Activated naive CD8-positive, alpha-beta T cell treated with anti-CD3 and anti-CD28 coated beads, Interleukin-2, amount 10 ng/mL, durations not matched to agents 7 days and 5 days (primary cell): ENCODE measurements at regions of chr5 and their contacts with region 1.

Region 1: DNA sequence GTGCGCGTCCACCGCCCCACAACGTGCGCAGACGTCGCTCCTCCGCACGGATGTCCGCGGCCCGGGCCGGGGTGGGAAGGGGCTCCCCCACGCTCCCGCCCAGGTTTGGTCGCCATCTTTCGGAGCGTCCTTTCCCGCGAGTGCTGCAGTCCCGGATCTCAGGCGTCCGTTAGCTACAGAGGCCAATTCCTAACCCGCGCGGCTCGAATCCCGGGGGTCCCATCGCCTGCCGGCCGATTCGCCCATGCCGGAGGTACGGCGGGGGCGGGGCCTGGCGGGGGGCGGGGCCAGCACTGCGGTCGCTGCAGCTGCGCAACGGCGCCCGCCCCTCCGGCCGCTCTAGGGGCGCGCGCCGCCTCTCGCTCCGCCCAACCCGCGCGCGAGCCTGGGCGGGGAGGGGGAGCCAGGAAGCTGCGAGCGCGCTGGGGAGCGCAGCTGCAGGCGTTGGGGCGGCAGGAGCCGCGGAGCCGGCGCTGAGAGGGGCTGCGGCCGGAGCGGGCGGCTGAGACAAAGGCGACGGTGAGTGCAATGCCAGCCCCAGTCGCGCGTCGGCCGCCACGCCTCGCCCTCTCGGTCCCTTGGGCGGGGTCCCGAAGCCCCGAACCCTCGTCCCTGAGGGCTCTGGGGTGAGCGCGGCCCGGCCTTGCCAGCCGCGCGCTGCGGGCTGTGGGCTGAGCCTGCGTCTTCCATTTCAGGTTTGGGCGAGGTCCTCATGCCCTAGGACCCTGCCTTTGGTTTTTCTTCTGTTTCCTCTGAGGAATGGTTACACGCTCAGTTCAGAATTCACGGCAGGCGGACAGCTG is at the start of gene CDC42SE2:
- DNase-seq: peak; percentile 96
- ATAC-seq: peak; percentile 86
- H3K4me3 Mint-ChIP-seq: peak within 1 kb of the TSS; percentile 90
- H3K27ac Mint-ChIP-seq: peak within 1 kb of the TSS; percentile 89
- H3K4me1 Mint-ChIP-seq: peaks cover 38% of the 10 kb centered on the region
- H3K27me3 Mint-ChIP-seq: no peaks in the 10 kb centered on the region
- total RNA-seq, gene CDC42SE2: 193 to 199 TPM

Region 2: DNA sequence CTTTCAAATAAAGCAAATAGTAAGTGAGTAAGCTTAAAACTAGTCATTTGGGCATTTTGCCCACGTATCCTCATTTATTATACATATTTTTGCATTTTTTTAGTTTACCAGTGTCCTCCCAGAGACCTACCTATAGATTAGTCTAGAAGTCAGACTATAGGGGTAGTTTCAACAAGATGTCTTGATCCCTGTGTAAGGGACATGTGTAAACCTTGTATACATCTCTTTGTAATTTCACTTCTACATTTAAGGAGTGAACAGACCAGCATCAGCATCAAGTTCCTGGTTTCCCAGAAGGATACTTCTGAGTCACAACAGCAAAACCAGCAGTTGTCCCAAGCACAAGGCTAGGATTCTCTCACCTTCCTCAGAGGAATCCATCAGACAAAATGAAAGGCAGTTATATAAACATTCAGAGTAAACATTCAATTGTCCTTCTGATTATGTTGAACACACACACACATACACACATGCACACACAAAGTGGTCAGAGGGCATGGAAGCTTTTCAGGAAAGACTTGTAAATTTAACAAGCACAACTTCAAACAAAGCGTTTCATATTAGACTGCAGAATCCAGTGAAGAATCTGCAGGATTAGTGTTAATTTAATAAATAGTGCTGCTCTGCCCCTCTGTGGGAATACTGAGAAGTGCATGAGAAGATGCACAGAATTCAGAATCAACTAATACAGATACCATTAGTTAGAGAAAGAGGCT is 154.2 kb before region 1 on chr5:
- POLR2A ChIA-PET with region 1: no interaction called
- DNase-seq: no peak
- ATAC-seq: peak; percentile 45
- H3K4me3 Mint-ChIP-seq: no peak overlapping the region
- H3K27ac Mint-ChIP-seq: no peak overlapping the region
- H3K4me1 Mint-ChIP-seq: peaks cover 10% of the 10 kb centered on the region
- H3K27me3 Mint-ChIP-seq: no peaks in the 10 kb centered on the region

Region 3: GRCh38 chr5:131165119-131165727 is 98.6 kb before region 1 on chr5 and contains the start of gene HINT1:
- POLR2A ChIA-PET with region 1: interaction called, 34 read pairs
- DNase-seq: peak; percentile 97
- ATAC-seq: peak; percentile 85
- H3K4me3 Mint-ChIP-seq: peak within 1 kb of the TSS; percentile 98
- H3K27ac Mint-ChIP-seq: peak within 1 kb of the TSS; percentile 97
- H3K4me1 Mint-ChIP-seq: peaks cover 42% of the 10 kb centered on the region
- H3K27me3 Mint-ChIP-seq: no peaks in the 10 kb centered on the region
- total RNA-seq, gene HINT1: 249 to 251 TPM

Region 4: GRCh38 chr5:131224387-131225201 is 39.3 kb before region 1 on chr5:
- POLR2A ChIA-PET with region 1: interaction called, 10 read pairs
- DNase-seq: peak; percentile 36
- ATAC-seq: peak; percentile 90
- H3K4me3 Mint-ChIP-seq: no peak overlapping the region
- H3K27ac Mint-ChIP-seq: no peak overlapping the region
- H3K4me1 Mint-ChIP-seq: peaks cover 6% of the 10 kb centered on the region
- H3K27me3 Mint-ChIP-seq: no peaks in the 10 kb centered on the region

Region 5: DNA sequence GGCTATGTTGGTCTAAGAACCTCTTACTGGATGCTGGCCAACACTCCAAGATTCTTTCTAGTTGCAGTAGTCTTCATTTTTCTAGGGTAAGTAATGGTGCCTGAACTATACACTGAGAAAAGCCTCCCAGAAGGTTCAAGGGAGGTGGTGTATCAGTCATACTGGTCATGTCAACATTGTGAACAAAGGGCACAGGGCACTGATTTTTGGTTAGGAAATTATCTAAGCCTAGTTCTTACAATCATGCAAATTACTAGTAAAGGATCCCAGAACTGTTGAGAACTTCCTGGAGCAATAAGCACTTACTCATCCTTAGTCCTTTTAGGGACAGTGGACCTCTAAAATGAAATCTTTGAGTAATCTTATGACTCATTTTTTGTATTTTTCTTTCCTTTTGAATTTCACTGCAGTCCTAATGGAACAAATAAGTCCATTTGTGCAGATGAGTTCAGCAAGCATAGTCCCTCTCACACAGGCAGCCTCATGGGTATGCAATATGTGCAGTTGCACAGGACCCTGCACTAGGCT is 21.1 kb before region 1 on chr5:
- POLR2A ChIA-PET with region 1: no interaction called
- DNase-seq: no peak
- ATAC-seq: no peak
- H3K4me3 Mint-ChIP-seq: no peak overlapping the region
- H3K27ac Mint-ChIP-seq: no peak overlapping the region
- H3K4me1 Mint-ChIP-seq: peaks cover 6% of the 10 kb centered on the region
- H3K27me3 Mint-ChIP-seq: peaks cover 2% of the 10 kb centered on the region

Region 6: GRCh38 chr5:131281133-131281867 is 17.5 kb after region 1 on chr5:
- POLR2A ChIA-PET with region 1: interaction called, 116 read pairs
- DNase-seq: no peak
- ATAC-seq: peak; percentile 78
- H3K4me3 Mint-ChIP-seq: peak overlapping the region; percentile 80
- H3K27ac Mint-ChIP-seq: peak overlapping the region; percentile 90
- H3K4me1 Mint-ChIP-seq: peaks cover 73% of the 10 kb centered on the region
- H3K27me3 Mint-ChIP-seq: no peaks in the 10 kb centered on the region

Region 7: GRCh38 chr5:131302506-131302905 is 38.7 kb after region 1 on chr5:
- POLR2A ChIA-PET with region 1: no interaction called
- DNase-seq: no peak
- ATAC-seq: no peak
- H3K4me3 Mint-ChIP-seq: no peak overlapping the region
- H3K27ac Mint-ChIP-seq: no peak overlapping the region
- H3K4me1 Mint-ChIP-seq: peaks cover 54% of the 10 kb centered on the region
- H3K27me3 Mint-ChIP-seq: no peaks in the 10 kb centered on the region

Region 8: DNA sequence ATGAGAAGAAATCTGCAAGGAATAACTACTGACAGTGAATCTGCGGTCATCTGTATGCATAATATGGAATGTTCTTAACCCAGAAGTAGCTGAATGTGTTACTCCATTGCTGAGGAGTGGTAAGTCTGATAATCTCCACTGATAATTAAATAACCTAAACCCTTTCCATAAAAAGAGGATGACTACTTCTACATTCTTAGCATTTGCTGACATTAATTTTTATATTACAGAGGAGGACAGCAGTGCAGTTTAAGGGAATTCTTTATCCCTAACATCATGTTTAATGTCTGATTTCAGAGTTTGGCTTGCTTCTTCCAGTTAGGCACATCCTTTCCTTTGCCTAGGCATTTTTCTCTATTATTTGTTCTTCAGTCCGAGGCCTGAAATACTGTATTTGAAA is 52.2 kb after region 1 on chr5:
- POLR2A ChIA-PET with region 1: no interaction called
- DNase-seq: no peak
- ATAC-seq: no peak
- H3K4me3 Mint-ChIP-seq: no peak overlapping the region
- H3K27ac Mint-ChIP-seq: no peak overlapping the region
- H3K4me1 Mint-ChIP-seq: peaks cover 50% of the 10 kb centered on the region
- H3K27me3 Mint-ChIP-seq: no peaks in the 10 kb centered on the region

Region 9: GRCh38 chr5:131382407-131383395 is 118.9 kb after region 1 on chr5:
- POLR2A ChIA-PET with region 1: interaction called, 45 read pairs
- DNase-seq: no peak
- ATAC-seq: peak; percentile 79
- H3K4me3 Mint-ChIP-seq: peak overlapping the region; percentile 47
- H3K27ac Mint-ChIP-seq: peak overlapping the region; percentile 67
- H3K4me1 Mint-ChIP-seq: peaks cover 63% of the 10 kb centered on the region
- H3K27me3 Mint-ChIP-seq: no peaks in the 10 kb centered on the region